ENCODE measurements at regions of chr3 and their contacts with region 1.

Region 1: DNA sequence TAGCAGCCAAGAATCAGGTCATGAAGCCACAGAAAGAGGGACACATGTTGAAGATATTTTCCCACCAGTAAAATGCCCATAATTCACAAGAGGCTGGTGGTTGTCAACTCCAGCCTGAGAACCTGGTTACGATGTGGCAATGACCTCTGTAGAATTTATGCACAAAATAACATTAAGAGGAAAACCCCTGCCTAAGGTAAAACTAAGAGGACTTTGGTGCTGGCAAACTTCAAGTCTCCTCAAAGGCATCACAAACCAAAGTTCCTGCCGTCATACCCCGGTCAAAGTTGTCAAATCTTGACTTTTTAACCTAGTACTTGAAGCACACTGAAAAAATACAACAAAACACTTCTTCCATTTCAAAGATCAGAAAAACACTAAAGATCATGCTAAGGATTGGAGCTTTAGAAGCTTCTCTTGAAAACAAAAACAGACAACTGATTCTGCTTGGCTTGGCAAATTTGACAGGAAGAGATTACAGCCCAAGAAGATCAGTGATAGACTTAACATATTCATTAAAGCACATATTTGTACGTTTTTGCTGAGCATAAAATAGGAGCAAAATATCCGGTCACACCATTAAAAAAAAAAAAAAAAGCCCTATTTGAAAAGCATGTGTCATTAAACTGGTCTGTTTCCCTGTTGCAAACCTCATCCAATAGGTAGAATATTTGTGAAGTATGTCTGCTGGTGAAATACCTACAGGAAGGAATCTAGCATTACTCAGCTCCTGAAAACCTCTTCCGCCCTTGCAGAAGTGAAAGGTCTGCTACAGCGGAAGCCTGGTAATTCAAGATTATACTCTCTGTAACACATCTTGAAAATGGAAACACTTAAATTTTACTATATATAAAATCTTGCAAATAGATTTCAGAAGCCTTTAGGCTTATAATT is 22.8 kb downstream of the EIF4E3 start:
- DNase-seq: no peak
- H3K4me3 ChIP-seq: no peak overlapping the region
- H3K27ac ChIP-seq: no peak overlapping the region
- H3K4me1 ChIP-seq: no peaks in the 10 kb centered on the region
- H3K27me3 ChIP-seq: no peaks in the 10 kb centered on the region
- CTCF ChIP-seq: no peak
- POLR2A ChIP-seq: no peak

Region 2: GRCh38 chr3:72821161-72821781 is 1118.9 kb after region 1 on chr3:
- intact Hi-C with region 1: loop called (anchors 10 kb)
- DNase-seq: peak in 1 of 2 donors; percentile 39
- H3K4me3 ChIP-seq: no peak overlapping the region
- H3K27ac ChIP-seq: no peak overlapping the region
- H3K4me1 ChIP-seq: peaks cover 0 to 6% of the 10 kb centered on the region in 2 donors
- H3K27me3 ChIP-seq: no peaks in the 10 kb centered on the region
- CTCF ChIP-seq: no peak
- POLR2A ChIP-seq: no peak